Activated naive CD4-positive, alpha-beta T cell treated with anti-CD3 and anti-CD28 coated beads for 36 hours (primary cell): ENCODE measurements at regions of chr11 and their contacts with region 1.

Region 1: GRCh38 chr11:22244986-22245592 is 52.2 kb downstream of the ANO5 start:
- DNase-seq: peak; percentile 22
- H3K4me3 Mint-ChIP-seq: no peak overlapping the region
- H3K27ac Mint-ChIP-seq: no peak overlapping the region
- H3K4me1 Mint-ChIP-seq: no peaks in the 10 kb centered on the region
- H3K27me3 Mint-ChIP-seq: peaks cover 24% of the 10 kb centered on the region

Region 2: DNA sequence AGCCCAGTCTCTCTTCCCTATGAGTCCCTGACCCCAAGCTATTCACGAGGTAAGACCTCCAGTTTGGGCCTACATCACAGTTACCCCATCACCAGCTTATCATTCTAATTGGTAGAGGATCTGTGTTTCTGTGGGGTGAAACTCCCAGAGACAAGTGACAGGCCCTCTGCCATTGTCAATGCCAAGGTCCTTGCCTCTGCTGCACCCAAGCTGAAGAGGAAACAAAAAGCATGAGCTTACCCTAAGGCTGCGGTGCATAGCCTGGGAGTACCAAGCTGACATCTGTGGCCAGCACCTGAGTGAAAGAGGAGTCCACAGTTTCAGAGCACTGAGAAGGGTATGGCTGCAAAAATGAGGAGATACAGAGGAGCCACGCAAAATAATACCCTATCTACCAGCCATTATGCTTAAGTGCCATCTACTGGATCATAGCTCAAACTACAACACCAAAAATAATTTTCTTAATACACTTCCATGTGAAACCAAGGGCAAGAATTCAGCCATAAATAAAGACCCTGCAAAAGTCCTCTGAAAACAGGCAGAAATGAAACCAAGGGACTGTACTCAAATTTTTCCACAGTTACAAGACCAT is 114.5 kb before region 1 on chr11:
- CTCF ChIA-PET with region 1: no interaction called
- intact Hi-C with region 1: no loop called
- DNase-seq: no peak
- H3K4me3 Mint-ChIP-seq: no peak overlapping the region
- H3K27ac Mint-ChIP-seq: no peak overlapping the region
- H3K4me1 Mint-ChIP-seq: no peaks in the 10 kb centered on the region
- H3K27me3 Mint-ChIP-seq: no peaks in the 10 kb centered on the region

Region 3: DNA sequence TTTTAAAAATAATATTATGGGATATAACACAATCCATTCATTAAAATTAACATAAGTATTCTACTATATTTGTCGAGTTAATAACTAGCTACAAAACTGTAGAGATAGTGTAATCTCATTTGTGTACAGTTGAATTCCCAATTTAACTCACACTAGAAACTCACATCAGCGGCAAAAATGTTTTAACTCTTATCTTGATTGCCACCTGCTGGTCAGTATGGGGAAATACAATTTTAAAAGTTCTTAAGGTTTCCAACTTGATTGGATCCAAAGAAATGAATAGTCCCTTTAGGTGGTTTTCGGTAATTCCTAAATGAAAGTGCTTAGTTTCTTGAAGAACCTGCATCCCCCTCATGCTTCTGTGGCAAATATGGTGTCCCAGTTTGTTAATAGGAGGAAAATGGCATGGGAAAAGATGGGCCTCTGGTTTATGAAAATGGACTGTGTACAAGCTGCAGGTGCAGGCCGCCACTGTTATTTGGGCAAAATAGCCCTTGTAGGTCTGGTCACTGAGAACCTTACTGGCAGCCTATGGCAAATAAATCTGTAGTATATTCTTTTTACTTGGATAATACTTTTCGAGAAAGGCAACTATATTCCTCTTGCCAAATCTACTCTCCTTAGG is 59.4 kb after region 1 on chr11:
- CTCF ChIA-PET with region 1: interaction called, 16 read pairs
- intact Hi-C with region 1: loop called (anchors 1 kb)
- DNase-seq: no peak
- H3K4me3 Mint-ChIP-seq: no peak overlapping the region
- H3K27ac Mint-ChIP-seq: no peak overlapping the region
- H3K4me1 Mint-ChIP-seq: no peaks in the 10 kb centered on the region
- H3K27me3 Mint-ChIP-seq: peaks cover 15% of the 10 kb centered on the region

Region 4: GRCh38 chr11:22510741-22511140 is 265.7 kb after region 1 on chr11:
- CTCF ChIA-PET with region 1: no interaction called
- intact Hi-C with region 1: no loop called
- DNase-seq: no peak
- H3K4me3 Mint-ChIP-seq: no peak overlapping the region
- H3K27ac Mint-ChIP-seq: no peak overlapping the region
- H3K4me1 Mint-ChIP-seq: no peaks in the 10 kb centered on the region
- H3K27me3 Mint-ChIP-seq: peaks cover 20% of the 10 kb centered on the region

Region 5: GRCh38 chr11:22539821-22540256 is 294.8 kb after region 1 on chr11:
- CTCF ChIA-PET with region 1: no interaction called
- intact Hi-C with region 1: loop called (anchors 10 kb)
- DNase-seq: no peak
- H3K4me3 Mint-ChIP-seq: no peak overlapping the region
- H3K27ac Mint-ChIP-seq: no peak overlapping the region
- H3K4me1 Mint-ChIP-seq: no peaks in the 10 kb centered on the region
- H3K27me3 Mint-ChIP-seq: peaks cover 20% of the 10 kb centered on the region

Region 6: DNA sequence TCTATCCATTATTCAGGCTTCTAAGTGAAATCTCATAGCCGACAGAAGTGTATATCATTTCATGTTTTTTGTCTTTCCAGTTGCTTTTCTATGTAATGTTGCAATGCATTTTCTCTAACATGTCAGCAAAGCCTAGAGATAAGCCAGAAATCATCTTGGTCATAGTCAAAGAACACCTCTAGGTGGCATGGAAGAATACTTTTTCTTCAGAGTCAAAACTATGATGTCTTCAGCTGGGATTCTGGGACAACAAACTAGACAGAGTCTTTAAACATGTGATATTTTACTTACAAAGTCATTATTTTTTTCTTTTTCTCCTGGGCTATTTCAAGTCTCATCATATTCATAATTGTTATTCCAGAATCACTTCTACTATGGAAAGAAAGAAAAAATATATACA is 425.7 kb after region 1 on chr11:
- CTCF ChIA-PET with region 1: no interaction called
- intact Hi-C with region 1: no loop called
- DNase-seq: no peak
- H3K4me3 Mint-ChIP-seq: no peak overlapping the region
- H3K27ac Mint-ChIP-seq: no peak overlapping the region
- H3K4me1 Mint-ChIP-seq: peaks cover 17% of the 10 kb centered on the region
- H3K27me3 Mint-ChIP-seq: peaks cover 47% of the 10 kb centered on the region